Naive thymus-derived CD4-positive, alpha-beta T cell (primary cell): ENCODE measurements at regions of chr11 and their contacts with region 1.

Region 1: DNA sequence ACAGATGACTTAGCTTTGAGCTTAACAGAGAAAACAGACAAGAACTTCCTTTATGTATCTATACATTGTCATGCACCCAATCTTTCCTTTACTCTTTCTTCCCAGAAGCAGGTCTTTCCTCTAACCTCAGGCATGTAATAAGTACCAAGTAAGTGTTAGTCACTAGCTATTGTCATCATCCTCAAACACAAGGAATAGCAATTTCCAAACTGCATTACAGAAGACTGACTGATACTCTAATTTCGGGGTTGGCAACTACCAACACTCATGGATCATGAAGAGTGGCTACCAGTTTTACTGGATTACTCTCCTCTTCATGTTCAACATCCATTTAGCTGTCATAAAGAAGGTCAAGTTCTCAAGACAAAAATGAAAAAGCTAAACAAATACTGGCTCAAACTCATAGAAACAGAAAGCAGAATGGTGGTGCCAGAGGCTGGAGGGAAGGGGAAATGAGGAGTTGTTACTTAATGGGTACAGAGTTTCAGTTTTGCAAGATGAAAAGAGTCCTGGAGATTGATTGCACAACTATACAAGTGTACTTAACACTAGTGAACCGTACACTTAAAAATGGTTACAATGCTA is 111.6 kb downstream of the SIK3 start:
- DNase-seq: no peak
- ATAC-seq: peak; percentile 71
- H3K4me3 ChIP-seq: no peak overlapping the region
- H3K4me3 Mint-ChIP-seq: peak overlapping the region in 8 of 10 donors; percentile 0 to 67 (median 20)
- H3K27ac ChIP-seq: no peak overlapping the region
- H3K27ac Mint-ChIP-seq: peak overlapping the region in 5 of 9 donors; percentile 0 to 80 (median 10)
- H3K4me1 ChIP-seq: peaks cover 0 to 10% of the 10 kb centered on the region in 2 donors
- H3K4me1 Mint-ChIP-seq: peaks cover 45 to 75% (median 69%) of the 10 kb centered on the region in 7 donors
- H3K27me3 ChIP-seq: no peaks in the 10 kb centered on the region
- H3K27me3 Mint-ChIP-seq: no peaks in the 10 kb centered on the region

Region 2: DNA sequence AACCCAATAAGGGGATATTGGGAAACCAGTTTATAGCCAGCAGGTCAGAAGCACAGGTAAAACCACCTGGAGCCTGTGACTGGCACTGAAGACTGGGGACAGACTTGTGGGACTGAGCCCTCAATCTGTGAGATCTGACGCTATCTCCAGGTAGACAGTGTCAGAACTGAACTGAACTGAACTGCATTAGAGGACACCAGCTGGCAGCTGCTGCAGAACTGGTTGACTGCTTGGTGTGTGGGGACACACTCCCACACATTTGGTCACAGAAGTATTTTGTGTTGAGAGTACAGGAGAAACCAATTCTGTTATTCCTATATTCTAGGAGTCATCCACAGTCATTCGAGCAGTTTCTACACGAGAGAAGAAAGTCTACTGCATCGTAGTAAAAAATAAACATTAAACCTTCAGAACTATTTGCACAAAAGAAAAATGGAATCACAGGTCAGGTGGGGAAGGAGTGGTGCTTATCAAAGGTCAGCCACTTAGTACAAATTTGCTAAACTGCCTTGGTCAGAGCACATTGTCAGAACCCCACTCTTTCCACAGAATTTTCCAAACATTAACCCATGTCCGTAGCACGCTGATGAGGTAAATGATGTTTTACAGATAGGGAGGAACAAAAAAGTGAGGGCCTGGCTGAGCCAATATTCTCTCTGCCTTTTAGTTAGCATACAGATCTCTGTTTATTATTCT is 34.4 kb after region 1 on chr11:
- CTCF ChIA-PET with region 1: no interaction called
- POLR2A ChIA-PET with region 1: interaction called, 4 read pairs
- intact Hi-C with region 1: loop called (anchors 5 kb)
- DNase-seq: no peak
- ATAC-seq: no peak
- H3K4me3 ChIP-seq: no peak overlapping the region
- H3K4me3 Mint-ChIP-seq: peak overlapping the region in 4 of 10 donors; percentile 23 to 52 (median 30)
- H3K27ac ChIP-seq: no peak overlapping the region
- H3K27ac Mint-ChIP-seq: peak overlapping the region in 6 of 9 donors; percentile 4 to 64 (median 34)
- H3K4me1 ChIP-seq: peaks cover 26 to 45% of the 10 kb centered on the region in 2 donors
- H3K4me1 Mint-ChIP-seq: peaks cover 53 to 76% (median 64%) of the 10 kb centered on the region in 7 donors
- H3K27me3 ChIP-seq: no peaks in the 10 kb centered on the region
- H3K27me3 Mint-ChIP-seq: no peaks in the 10 kb centered on the region